ENCODE measurements at regions of chr15 and their contacts with region 1.

Region 1: DNA sequence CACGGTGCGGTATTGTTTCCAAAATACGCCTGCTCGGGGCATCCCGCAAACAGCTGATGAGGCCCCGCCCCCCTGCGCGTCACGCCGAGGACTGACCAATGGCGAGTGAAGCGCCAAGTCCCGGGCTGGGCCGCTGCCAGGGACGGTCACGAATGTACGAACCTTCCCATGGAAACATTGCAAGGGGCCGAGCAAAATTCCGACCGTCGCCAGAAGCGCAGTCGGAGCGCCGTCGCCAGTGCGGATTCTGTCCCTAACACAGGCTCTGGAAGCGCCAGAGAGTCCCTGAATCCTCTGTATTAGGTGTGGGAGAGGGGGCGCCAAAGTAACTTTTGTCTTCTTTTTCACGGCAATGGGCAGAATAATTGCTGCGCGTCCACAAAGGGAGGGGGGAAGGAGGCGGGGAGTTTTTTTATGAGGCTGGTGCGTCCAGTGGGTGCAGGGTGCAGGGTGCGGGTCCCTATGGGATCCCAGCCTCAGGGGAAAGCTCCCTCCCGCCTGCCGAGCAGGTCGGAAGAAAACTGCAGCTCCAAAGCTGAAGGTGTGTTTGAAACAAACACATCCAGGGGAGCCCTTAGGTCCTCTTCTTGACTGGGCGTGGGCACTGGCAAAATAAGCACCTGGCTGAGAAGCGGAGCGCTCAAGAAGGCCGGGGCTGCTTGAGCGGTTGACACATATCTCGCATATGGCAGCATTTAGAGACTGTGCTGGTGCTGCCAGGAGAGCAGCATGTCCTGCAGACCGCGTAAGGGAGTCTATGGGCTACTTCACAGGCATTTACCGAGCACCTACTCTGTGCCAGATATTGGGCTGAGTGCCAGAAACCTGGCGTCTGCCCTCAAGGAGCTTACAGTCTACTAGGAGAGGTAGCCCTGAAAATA is at the start of gene BMF:
- DNase-seq: peak; percentile 98
- ATAC-seq: peak; percentile 72
- H3K4me3 Mint-ChIP-seq: peak within 1 kb of the TSS; percentile 81
- H3K27ac Mint-ChIP-seq: peak within 1 kb of the TSS; percentile 58
- H3K4me1 Mint-ChIP-seq: peaks cover 50% of the 10 kb centered on the region
- H3K27me3 Mint-ChIP-seq: peaks cover 12% of the 10 kb centered on the region
- CTCF ChIP-seq: no peak
- total RNA-seq, gene BMF: 4.2 to 4.3 TPM

Region 2: GRCh38 chr15:40029979-40030893 is 78.9 kb before region 1 on chr15:
- CTCF ChIA-PET with region 1: interaction called, 10 read pairs
- POLR2A ChIA-PET with region 1: interaction called, 3 read pairs
- intact Hi-C with region 1: no loop called
- DNase-seq: peak; percentile 49
- ATAC-seq: peak; percentile 51
- H3K4me3 Mint-ChIP-seq: no peak overlapping the region
- H3K27ac Mint-ChIP-seq: no peak overlapping the region
- H3K4me1 Mint-ChIP-seq: peaks cover 5% of the 10 kb centered on the region
- H3K27me3 Mint-ChIP-seq: no peaks in the 10 kb centered on the region
- CTCF ChIP-seq: peak; percentile 60

Region 3: GRCh38 chr15:40044717-40045571 is 64.2 kb before region 1 on chr15:
- CTCF ChIA-PET with region 1: interaction called, 198 read pairs
- POLR2A ChIA-PET with region 1: interaction called, 9 read pairs
- intact Hi-C with region 1: loop called (anchors 2 kb)
- DNase-seq: peak; percentile 95
- ATAC-seq: peak; percentile 85
- H3K4me3 Mint-ChIP-seq: peak overlapping the region; percentile 9
- H3K27ac Mint-ChIP-seq: peak overlapping the region; percentile 85
- H3K4me1 Mint-ChIP-seq: peaks cover 85% of the 10 kb centered on the region
- H3K27me3 Mint-ChIP-seq: no peaks in the 10 kb centered on the region
- CTCF ChIP-seq: peak; percentile 96

Region 4: GRCh38 chr15:40063563-40064011 is 45.5 kb before region 1 on chr15:
- CTCF ChIA-PET with region 1: interaction called, 53 read pairs
- POLR2A ChIA-PET with region 1: no interaction called
- intact Hi-C with region 1: no loop called
- DNase-seq: no peak
- ATAC-seq: no peak
- H3K4me3 Mint-ChIP-seq: no peak overlapping the region
- H3K27ac Mint-ChIP-seq: peak overlapping the region; percentile 8
- H3K4me1 Mint-ChIP-seq: peaks cover 26% of the 10 kb centered on the region
- H3K27me3 Mint-ChIP-seq: no peaks in the 10 kb centered on the region
- CTCF ChIP-seq: no peak

Region 5: GRCh38 chr15:40121911-40122638 is 13.0 kb after region 1 on chr15:
- CTCF ChIA-PET with region 1: interaction called, 99 read pairs
- POLR2A ChIA-PET with region 1: no interaction called
- intact Hi-C with region 1: no loop called
- DNase-seq: no peak
- ATAC-seq: no peak
- H3K4me3 Mint-ChIP-seq: no peak overlapping the region
- H3K27ac Mint-ChIP-seq: no peak overlapping the region
- H3K4me1 Mint-ChIP-seq: no peaks in the 10 kb centered on the region
- H3K27me3 Mint-ChIP-seq: no peaks in the 10 kb centered on the region
- CTCF ChIP-seq: no peak